Sciatic nerve (tissue), 2 donors: ENCODE measurements at regions of chrX and their contacts with region 1.

Region 1: DNA sequence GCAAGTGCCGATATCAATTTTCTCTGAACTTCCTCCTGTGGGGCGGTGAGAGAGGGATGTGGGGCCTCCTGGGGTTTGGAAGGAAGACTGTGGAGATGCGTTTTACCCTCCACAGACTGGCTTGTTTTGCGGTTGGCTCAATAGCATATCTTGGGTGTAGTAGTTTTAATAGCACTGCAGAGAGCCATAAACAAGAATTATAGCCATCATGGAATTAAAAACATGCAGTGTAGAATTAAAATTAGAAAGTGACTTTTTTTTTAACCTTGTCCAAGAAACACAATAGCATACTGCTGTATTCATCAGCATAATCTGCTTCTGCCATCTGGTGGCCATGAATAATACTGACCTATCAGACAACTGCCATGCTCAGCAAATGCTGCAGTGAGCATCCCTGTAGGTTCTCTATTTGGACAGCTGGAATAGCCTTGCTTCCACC is 47.3 kb upstream of the SCML1 start:
- DNase-seq: no peak
- ATAC-seq: peak; percentile 94

Region 2: GRCh38 chrX:17247145-17247544 is 442.8 kb before region 1 on chrX:
- intact Hi-C with region 1: loop called (anchors 5 kb)
- DNase-seq: no peak
- ATAC-seq: no peak